ENCODE measurements at regions of chr6 and their contacts with region 1.

Region 1: GRCh38 chr6:14910692-14911547 is 334.9 kb upstream of the JARID2 start:
- DNase-seq: peak; percentile 44 to 83
- H3K4me3 ChIP-seq: no peak overlapping the region
- CTCF ChIP-seq: no peak
- POLR2A ChIP-seq: no peak

Region 2: GRCh38 chr6:14440940-14441781 is 469.8 kb before region 1 on chr6:
- intact Hi-C with region 1: loop called (anchors 10 kb)
- DNase-seq: no peak
- H3K4me3 ChIP-seq: no peak overlapping the region
- CTCF ChIP-seq: no peak
- POLR2A ChIP-seq: no peak

Region 3: GRCh38 chr6:14758421-14759081 is 152.4 kb before region 1 on chr6:
- intact Hi-C with region 1: no loop called
- DNase-seq: peak in 1 of 2 donors; percentile 42
- H3K4me3 ChIP-seq: no peak overlapping the region
- CTCF ChIP-seq: no peak
- POLR2A ChIP-seq: no peak

Region 4: DNA sequence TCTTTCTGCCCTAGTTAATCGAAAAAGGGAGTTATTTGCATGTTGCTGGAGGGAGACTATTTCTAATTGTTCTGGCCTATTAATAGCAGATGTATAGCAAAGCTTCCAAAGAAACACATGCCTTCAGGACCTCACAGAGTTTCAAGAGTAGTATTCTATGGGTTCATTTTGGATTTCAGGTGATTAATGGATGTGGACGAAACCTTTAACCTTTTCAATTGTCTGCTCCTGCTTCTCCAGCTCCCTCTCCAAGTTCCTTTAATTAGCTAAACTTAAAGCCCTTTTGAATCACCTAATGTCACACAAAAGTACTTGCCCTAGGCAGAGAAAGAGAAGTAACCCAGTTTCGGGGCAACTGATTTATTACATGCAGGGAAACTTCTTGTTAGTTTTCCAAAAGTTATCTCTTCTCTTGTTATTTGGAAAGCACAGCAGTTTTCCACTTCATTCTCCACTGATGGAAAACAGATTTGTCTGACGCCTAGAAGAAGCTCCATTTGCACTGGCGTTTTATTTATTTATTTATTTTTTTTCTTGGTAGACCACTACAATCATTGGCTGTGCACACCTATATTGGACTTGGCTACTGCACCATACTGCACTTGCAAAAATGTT is 72.8 kb before region 1 on chr6:
- intact Hi-C with region 1: no loop called
- DNase-seq: no peak
- H3K4me3 ChIP-seq: no peak overlapping the region
- CTCF ChIP-seq: no peak
- POLR2A ChIP-seq: no peak

Region 5: DNA sequence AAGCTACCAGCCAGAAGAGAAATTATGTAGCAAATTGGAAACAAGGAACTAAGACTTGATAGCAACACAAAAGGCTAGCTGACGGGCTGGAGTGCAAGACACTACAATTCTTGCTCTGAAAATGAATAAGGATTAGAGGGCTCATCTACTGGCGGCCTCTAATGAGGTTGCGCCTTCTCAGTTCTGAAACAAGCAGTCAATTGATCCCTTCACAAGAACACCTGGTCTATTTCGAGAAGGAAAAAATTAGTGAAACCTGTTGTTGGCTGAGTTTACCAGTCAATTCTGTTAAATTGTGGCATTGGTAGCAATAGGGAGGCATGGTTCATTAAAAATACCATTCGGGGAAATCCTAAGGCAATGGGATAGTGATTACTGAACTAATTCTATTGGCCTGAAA is 260.1 kb after region 1 on chr6:
- intact Hi-C with region 1: no loop called
- DNase-seq: no peak
- H3K4me3 ChIP-seq: no peak overlapping the region
- CTCF ChIP-seq: no peak
- POLR2A ChIP-seq: no peak

Measured in lower leg skin (tissue), 4 donors.